B cell (primary cell): ENCODE measurements at regions of chr12 and their contacts with region 1.

Region 1: DNA sequence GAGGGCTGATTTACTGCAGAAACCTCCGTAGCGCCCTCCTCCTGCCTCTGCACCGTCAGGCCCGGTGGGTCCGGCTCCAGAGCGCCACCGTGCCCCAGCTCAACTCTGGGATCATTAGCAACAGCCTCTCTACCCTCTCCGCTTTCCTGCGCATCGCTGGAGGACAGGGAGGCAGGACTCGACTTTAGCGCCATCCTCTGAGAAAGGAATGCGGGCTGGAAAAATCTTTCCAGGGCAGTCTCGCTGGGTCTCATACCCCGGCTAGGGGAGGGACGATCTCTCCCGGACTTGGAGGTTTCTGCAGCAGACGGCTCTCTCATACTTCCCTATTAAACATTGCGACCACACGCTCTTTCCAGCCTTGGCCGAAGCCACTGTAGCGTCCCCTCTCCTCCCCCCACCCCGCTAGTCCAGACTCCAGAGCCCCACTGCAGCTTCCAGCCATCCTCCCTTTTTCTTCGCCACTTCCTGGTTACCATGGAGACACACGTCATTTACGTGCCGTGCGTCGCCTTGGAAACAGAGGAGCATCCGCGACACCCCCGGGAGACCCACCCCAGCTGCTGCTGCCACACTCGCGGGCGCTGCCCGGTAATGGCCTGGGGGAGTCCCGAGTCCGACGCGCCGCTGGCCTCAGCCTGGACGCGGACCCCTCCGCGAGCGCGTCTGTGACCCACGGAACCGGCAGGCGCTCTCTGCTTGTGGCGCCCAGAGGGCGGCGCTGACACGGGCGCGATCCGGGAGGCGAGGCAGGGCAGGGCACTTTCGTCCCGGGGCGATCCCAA is at the start of gene CCDC184:
- DNase-seq: peak; percentile 89
- ATAC-seq: peak; percentile 75
- H3K4me3 ChIP-seq: peak within 1 kb of the TSS; percentile 69 to 90 (median 77)
- H3K4me3 Mint-ChIP-seq: peak within 1 kb of the TSS; percentile 98
- H3K27ac ChIP-seq: peak within 1 kb of the TSS in 1 of 2 donors; percentile 11
- H3K27ac Mint-ChIP-seq: peak within 1 kb of the TSS; percentile 84
- H3K4me1 ChIP-seq: peaks cover 27 to 29% of the 10 kb centered on the region in 2 donors
- H3K4me1 Mint-ChIP-seq: peaks cover 28% of the 10 kb centered on the region
- H3K27me3 ChIP-seq: peaks cover 0 to 38% (median 15%) of the 10 kb centered on the region in 4 experiments
- H3K27me3 Mint-ChIP-seq: peaks cover 37% of the 10 kb centered on the region
- CTCF ChIP-seq: peak; percentile 45
- total RNA-seq, gene CCDC184: 0.54 and 0.66 TPM in 2 replicates

Region 2: DNA sequence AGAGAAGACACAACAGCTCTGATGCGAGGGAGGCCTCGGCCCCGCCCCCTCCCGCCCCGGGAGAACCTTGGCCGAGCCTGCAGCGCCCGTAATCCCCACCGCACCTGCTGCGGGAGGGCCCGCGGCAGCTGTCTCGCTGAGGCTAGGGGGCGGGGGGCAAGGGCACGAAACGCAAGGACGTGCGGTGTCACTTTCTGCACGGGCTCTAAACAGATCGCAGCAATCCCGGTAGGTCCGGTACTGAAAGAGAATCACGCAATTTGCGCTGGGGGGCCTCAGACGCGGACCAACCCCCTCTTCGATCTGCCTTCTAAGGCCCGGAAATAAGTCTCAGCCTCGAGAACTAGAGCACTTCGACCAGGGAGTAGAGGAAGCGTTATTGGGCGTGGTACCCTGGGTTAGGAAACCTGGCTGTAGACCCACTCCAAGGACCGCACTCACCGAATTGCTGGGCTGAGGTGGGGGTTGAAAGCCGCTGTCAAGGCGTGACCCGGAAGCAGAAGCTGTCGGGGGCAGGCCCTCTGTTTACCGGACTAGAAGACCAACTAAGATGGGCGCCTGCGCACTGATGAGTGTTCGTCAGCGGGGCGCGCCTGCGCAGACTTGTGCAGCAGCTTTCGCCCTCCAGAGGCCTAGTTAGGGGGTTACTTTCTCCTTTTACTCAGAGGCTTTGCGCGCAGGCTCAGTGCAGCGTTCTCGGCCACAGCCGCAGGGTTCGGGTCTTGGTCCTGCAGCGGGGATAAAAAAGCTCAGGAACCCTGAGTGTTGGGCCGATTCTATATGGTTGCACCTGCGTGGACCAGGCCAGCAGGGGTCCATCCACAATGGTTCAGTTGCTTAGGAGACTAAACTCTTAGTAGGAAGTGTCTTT is 26.0 kb before region 1 on chr12 and contains the start of gene ASB8:
- CTCF ChIA-PET with region 1: interaction called, 9 read pairs
- POLR2A ChIA-PET with region 1: interaction called, 6 read pairs
- intact Hi-C with region 1: loop called (anchors 1 kb)
- DNase-seq: peak; percentile 99
- ATAC-seq: peak; percentile 91
- H3K4me3 ChIP-seq: peak within 1 kb of the TSS; percentile 81 to 98 (median 88)
- H3K4me3 Mint-ChIP-seq: peak within 1 kb of the TSS; percentile 99
- H3K27ac ChIP-seq: peak within 1 kb of the TSS; percentile 67 to 84
- H3K27ac Mint-ChIP-seq: peak within 1 kb of the TSS; percentile 99
- H3K4me1 ChIP-seq: peaks cover 14 to 15% of the 10 kb centered on the region in 2 donors
- H3K4me1 Mint-ChIP-seq: peaks cover 21% of the 10 kb centered on the region
- H3K27me3 ChIP-seq: no peaks in the 10 kb centered on the region
- H3K27me3 Mint-ChIP-seq: no peaks in the 10 kb centered on the region
- CTCF ChIP-seq: peak; percentile 64
- total RNA-seq, gene ASB8: 53.2 and 54.8 TPM in 2 replicates

Region 3: GRCh38 chr12:48350249-48351021 is 167.2 kb after region 1 on chr12 and contains the start of gene ZNF641:
- CTCF ChIA-PET with region 1: no interaction called
- POLR2A ChIA-PET with region 1: no interaction called
- intact Hi-C with region 1: loop called (anchors 5 kb)
- DNase-seq: peak; percentile 85
- ATAC-seq: peak; percentile 90
- H3K4me3 ChIP-seq: peak within 1 kb of the TSS; percentile 71 to 87 (median 82)
- H3K4me3 Mint-ChIP-seq: peak within 1 kb of the TSS; percentile 97
- H3K27ac ChIP-seq: peak within 1 kb of the TSS; percentile 60 to 85
- H3K27ac Mint-ChIP-seq: peak within 1 kb of the TSS; percentile 96
- H3K4me1 ChIP-seq: peaks cover 7 to 15% of the 10 kb centered on the region in 2 donors
- H3K4me1 Mint-ChIP-seq: peaks cover 22% of the 10 kb centered on the region
- H3K27me3 ChIP-seq: no peaks in the 10 kb centered on the region
- H3K27me3 Mint-ChIP-seq: no peaks in the 10 kb centered on the region
- CTCF ChIP-seq: no peak
- total RNA-seq, gene ZNF641: 29.7 and 34.2 TPM in 2 replicates